ENCODE measurements at regions of chr2 and their contacts with region 1.

Region 1: DNA sequence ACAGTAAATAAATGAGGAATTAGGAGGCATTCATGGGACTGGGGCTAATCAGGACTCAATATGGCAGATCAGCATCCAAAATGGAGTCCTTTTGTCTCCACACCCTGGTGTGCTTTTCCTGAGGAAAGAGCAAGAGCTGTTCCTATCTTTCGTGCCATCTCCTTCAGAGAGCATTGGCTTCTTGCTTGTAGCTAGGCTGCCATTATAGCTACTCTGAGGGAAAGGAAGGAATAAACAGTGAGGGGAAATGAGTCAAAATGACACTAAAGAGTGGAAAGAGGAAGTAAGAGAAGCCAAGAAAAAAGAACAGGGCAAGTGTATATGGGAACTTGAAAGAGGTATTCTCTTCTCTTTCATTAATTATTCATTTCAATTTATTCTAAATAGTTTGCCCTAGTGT is 8.4 kb upstream of the NMI start:
- DNase-seq: no peak
- H3K4me3 ChIP-seq: no peak overlapping the region
- H3K27ac ChIP-seq: no peak overlapping the region
- H3K4me1 ChIP-seq: no peaks in the 10 kb centered on the region
- H3K27me3 ChIP-seq: no peaks in the 10 kb centered on the region
- CTCF ChIP-seq: no peak

Region 2: DNA sequence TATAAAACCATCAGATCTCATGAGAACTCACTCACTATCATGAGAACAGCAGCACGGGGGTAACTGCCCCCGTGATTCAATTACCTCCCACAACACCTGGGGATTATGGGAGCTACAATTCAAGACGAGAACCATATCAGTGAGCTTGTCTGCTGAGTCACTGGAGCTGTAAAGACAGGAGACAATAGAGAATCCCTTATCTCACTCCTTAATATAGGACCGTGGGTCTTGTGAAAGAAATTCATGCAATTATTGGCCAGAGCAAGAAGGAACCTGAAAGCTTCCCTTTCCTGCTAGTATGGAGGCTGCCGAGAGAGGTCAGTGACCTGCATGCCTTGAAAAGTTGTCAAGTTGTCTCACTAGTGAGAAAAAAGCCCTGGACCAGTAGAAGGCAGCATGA is 50.0 kb after region 1 on chr2:
- CTCF ChIA-PET with region 1: no interaction called
- dilution Hi-C with region 1: loop called (anchors 5 kb)
- in situ Hi-C with region 1: no loop called
- intact Hi-C with region 1: no loop called
- DNase-seq: no peak
- H3K4me3 ChIP-seq: no peak overlapping the region
- H3K27ac ChIP-seq: no peak overlapping the region
- H3K4me1 ChIP-seq: no peaks in the 10 kb centered on the region
- H3K27me3 ChIP-seq: no peaks in the 10 kb centered on the region
- CTCF ChIP-seq: no peak